SK-N-SH (cell line): ENCODE measurements at regions of chr16 and their contacts with region 1.

Region 1: GRCh38 chr16:17467923-17468540 is 2.7 kb downstream of the XYLT1 start:
- DNase-seq: peak; percentile 80
- H3K4me3 ChIP-seq: peak overlapping the region; percentile 84 to 93
- H3K27ac ChIP-seq: peak overlapping the region; percentile 80 to 84; a peak in 2 of 4 replicates
- H3K4me1 ChIP-seq: peaks cover 11 to 35% of the 10 kb centered on the region in 2 experiments; a peak in 3 of 4 replicates
- H3K27me3 ChIP-seq: no peaks in the 10 kb centered on the region
- CTCF ChIP-seq: peak; percentile 86
- EP300 ChIP-seq: 0 out of 4 replicates have a peak, but pooled peaks of 1 of the 2 experiments have one; percentile 22
- RAD21 ChIP-seq: peak; percentile 96

Region 2: GRCh38 chr16:16861546-16861945 is 606.5 kb before region 1 on chr16:
- CTCF ChIA-PET with region 1: interaction called, 25 read pairs
- POLR2A ChIA-PET with region 1: no interaction called
- DNase-seq: peak; percentile 71
- H3K4me3 ChIP-seq: no peak overlapping the region
- H3K27ac ChIP-seq: no peak overlapping the region
- H3K4me1 ChIP-seq: peaks cover 0 to 3% of the 10 kb centered on the region in 2 experiments; a peak in 1 of 4 replicates
- H3K27me3 ChIP-seq: no peaks in the 10 kb centered on the region
- CTCF ChIP-seq: peak; percentile 77
- EP300 ChIP-seq: no peak
- RAD21 ChIP-seq: peak; percentile 85

Region 3: DNA sequence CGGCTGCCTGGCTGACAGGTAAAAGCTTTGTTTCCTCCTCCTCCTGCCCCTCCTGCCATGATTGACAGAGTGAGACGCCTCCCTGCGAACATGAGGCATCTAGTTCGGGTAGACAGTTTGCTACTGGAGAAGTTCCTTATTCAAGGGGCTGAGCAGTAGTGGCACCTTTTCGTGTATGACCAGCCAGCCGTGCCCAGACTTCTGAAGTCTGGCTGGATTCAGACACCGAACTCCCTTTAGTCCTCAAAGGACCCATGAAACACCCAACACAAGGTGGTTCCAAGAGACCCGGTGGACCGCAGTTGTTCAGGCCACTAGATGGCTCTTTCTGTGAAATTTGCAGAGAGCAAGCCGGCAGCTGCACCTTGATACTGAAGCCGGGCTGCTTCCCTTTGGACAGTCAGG is 190.1 kb before region 1 on chr16:
- CTCF ChIA-PET with region 1: interaction called, 13 read pairs
- POLR2A ChIA-PET with region 1: no interaction called
- DNase-seq: no peak
- H3K4me3 ChIP-seq: no peak overlapping the region
- H3K27ac ChIP-seq: no peak overlapping the region
- H3K4me1 ChIP-seq: peaks cover 0 to 36% of the 10 kb centered on the region in 2 experiments; a peak in 2 of 4 replicates
- H3K27me3 ChIP-seq: no peaks in the 10 kb centered on the region
- CTCF ChIP-seq: no peak; the same call in 1 of the 2 replicates
- EP300 ChIP-seq: no peak
- RAD21 ChIP-seq: peak; percentile 50

Region 4: DNA sequence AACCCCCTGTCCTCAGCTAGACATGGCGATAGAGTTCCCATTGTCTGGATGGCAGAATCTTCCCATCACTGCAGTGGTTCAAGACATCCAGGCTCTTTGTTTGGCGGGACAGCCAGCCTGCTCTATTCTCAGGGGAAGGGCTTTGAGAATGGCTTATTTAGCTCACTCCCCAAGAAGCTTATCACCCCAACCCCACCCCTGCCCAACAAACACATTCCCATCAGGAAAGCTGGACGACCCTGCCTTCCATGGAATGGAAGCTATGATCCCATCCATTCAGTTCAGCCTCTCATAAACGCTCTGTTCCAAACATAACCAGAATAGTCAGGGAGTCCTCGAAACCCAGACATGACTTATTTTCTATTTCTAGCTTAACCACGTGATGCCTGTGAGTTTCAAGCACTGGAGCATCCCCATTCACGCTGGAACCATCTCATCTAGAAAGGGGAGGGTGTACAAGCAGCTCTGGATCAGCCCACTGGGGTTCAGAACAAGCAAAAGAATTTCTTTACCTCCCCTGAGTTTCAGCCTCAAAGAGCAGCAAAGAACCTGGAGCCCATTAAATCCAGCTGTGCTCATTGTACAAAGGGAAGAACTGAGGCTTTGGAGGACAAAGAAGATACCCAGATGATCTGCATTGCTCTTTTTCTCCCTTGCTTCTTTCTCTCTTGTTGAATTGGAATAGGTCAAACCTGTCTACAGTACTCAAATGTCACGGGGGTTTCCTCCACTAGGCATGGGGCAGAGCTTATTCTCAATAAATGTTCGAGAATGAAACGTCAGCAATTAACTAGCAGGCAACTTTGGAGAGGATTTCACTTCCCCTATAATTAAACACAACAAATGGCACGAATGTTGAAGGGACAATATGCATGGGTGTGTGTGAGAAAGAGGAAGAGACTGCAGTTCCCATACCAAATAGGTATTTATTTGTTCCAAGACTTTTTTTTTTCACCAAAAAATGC is 90.4 kb before region 1 on chr16:
- CTCF ChIA-PET with region 1: interaction called, 12 read pairs
- POLR2A ChIA-PET with region 1: no interaction called
- DNase-seq: no peak
- H3K4me3 ChIP-seq: no peak overlapping the region
- H3K27ac ChIP-seq: peak overlapping the region in 1 of 2 experiments; percentile 24; a peak in 2 of 4 replicates
- H3K4me1 ChIP-seq: peaks cover 21 to 65% of the 10 kb centered on the region in 2 experiments; a peak in 3 of 4 replicates
- H3K27me3 ChIP-seq: no peaks in the 10 kb centered on the region
- CTCF ChIP-seq: no peak
- EP300 ChIP-seq: no peak
- RAD21 ChIP-seq: no peak

Region 5: DNA sequence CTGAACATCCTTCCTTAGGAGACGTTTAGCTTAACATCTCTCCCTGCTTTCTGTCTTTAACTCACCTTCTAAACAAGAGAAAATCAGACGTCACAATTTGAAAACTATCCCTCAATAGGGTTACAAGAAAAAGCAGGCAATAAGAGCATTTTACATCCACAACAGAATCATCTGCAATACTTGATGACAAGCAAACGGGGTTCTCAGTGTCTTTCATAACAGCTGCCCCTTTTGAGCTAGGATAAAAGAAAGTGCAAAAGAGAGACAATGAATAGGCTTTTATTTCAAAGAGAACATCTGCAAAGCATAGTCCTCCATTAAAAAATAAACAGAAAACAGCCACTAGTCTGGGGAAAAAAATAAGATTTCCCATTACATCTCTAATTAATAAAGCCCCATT is 10.5 kb before region 1 on chr16:
- CTCF ChIA-PET with region 1: interaction called, 17 read pairs
- POLR2A ChIA-PET with region 1: interaction called, 6 read pairs
- DNase-seq: no peak
- H3K4me3 ChIP-seq: no peak overlapping the region
- H3K27ac ChIP-seq: no peak overlapping the region; a peak in 1 of 4 replicates
- H3K4me1 ChIP-seq: peaks cover 0 to 38% of the 10 kb centered on the region in 2 experiments; a peak in 1 of 4 replicates
- H3K27me3 ChIP-seq: no peaks in the 10 kb centered on the region
- CTCF ChIP-seq: no peak
- EP300 ChIP-seq: no peak
- RAD21 ChIP-seq: no peak